ENCODE measurements at regions of chr3 and their contacts with region 1.

Region 1: DNA sequence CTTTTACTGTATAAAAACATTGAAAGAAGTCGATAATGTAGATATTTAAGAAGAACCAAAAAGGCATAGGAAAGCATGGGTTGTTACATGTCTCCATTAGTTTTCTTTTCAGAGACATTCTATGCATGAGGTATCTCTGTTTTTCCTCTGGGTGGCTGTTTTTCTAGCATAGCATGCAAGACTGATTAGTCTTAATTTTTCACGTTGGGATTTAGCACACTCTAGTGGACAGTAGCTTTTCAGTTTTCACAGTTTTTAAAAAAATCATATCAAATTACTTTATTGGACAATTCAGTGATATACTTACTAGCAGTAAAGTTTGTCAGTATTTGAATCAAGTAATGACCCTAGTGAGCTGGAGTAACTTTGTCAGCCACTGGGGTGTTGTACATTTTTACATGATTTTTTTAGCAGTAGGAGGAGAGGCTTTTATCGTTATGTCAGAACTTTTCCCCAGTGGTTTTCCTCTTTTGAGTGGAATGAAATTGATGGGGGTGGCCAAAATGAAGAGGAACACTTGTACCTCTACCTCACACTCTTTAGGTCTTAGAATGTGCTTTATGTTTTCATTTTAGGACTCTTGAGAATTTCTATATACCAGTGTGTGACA is 57.2 kb downstream of the SEC22A start:
- DNase-seq: peak; percentile 41
- H3K4me3 ChIP-seq: no peak overlapping the region
- H3K27ac ChIP-seq: no peak overlapping the region
- H3K4me1 ChIP-seq: peaks cover 4% of the 10 kb centered on the region
- H3K27me3 ChIP-seq: no peaks in the 10 kb centered on the region
- CTCF ChIP-seq: peak; percentile 39 to 61

Region 2: DNA sequence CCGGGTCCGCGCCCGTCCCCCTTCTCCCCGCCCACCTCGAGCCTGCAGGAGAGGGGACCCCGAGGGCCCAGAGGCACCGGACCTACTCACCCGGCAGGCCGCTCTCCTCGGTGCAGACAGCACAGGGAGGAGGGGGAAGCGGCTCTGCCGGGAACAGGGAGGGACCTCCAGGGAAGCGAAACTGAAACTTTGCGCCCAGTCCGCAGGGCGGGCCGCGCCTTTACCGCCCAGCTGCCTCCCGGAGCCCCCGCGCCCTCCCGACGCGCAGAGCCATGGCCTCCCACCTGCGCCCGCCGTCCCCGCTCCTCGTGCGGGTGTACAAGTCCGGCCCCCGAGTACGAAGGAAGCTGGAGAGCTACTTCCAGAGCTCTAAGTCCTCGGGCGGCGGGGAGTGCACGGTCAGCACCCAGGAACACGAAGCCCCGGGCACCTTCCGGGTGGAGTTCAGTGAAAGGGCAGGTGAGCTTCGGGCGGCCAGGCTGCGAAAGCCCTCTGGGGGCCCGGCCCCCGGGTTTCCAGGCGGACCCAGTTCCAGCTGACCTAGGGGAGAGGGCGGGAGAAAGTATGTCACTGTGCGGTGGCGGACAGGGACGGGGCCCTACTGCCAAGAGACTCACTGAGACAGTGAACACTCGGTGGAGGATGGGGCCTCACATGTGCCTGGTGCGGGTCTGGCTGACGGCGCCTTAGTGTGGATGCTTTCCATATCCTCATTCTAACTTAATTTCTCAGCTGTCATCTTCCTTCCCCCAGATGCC is 694.6 kb before region 1 on chr3 and contains the starts of genes DTX3L and PARP9:
- CTCF ChIA-PET with region 1: no interaction called
- dilution Hi-C with region 1: no loop called
- in situ Hi-C with region 1: no loop called
- intact Hi-C with region 1: loop called (anchors 5 kb)
- DNase-seq: peak; percentile 77
- H3K4me3 ChIP-seq: peak within 1 kb of the TSS; percentile 87 to 93 (median 91)
- H3K27ac ChIP-seq: peak within 1 kb of the TSS; percentile 76
- H3K4me1 ChIP-seq: peaks cover 12% of the 10 kb centered on the region
- H3K27me3 ChIP-seq: no peaks in the 10 kb centered on the region
- CTCF ChIP-seq: no peak
- total RNA-seq, gene DTX3L: 10.7 to 15.6 TPM
- total RNA-seq, gene PARP9: 6.4 to 10.0 TPM

Region 3: DNA sequence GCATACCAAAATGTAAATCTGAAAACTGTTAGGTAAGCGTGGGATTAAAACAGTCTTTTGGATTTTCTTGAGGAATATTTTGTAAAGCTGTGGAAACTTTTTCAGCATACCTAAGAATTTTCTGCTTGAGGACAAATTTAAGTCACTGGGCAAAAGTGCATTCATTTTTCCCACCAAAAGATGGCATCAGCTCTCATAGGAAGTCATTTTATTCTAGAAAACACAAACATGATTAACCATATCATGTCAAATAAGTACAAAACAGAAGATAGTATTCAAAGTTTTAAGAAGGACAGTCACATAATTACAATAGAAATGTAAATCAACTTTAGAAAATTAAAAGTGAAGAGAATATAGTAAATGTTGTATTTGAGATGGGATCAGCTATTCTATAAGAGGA is 400.5 kb before region 1 on chr3:
- CTCF ChIA-PET with region 1: no interaction called
- dilution Hi-C with region 1: no loop called
- in situ Hi-C with region 1: no loop called
- intact Hi-C with region 1: loop called (anchors 5 kb)
- DNase-seq: peak; percentile 32
- H3K4me3 ChIP-seq: no peak overlapping the region
- H3K27ac ChIP-seq: no peak overlapping the region
- H3K4me1 ChIP-seq: no peaks in the 10 kb centered on the region
- H3K27me3 ChIP-seq: no peaks in the 10 kb centered on the region
- CTCF ChIP-seq: peak; percentile 52 to 59

Region 4: GRCh38 chr3:123323781-123324180 is 64.9 kb after region 1 on chr3:
- CTCF ChIA-PET with region 1: interaction called, 10 read pairs
- dilution Hi-C with region 1: no loop called
- in situ Hi-C with region 1: no loop called
- intact Hi-C with region 1: no loop called
- DNase-seq: no peak
- H3K4me3 ChIP-seq: no peak overlapping the region
- H3K27ac ChIP-seq: no peak overlapping the region
- H3K4me1 ChIP-seq: no peaks in the 10 kb centered on the region
- H3K27me3 ChIP-seq: no peaks in the 10 kb centered on the region
- CTCF ChIP-seq: no peak